Panc1 (cell line): ENCODE measurements at regions of chr13 and their contacts with region 1.

Region 1: DNA sequence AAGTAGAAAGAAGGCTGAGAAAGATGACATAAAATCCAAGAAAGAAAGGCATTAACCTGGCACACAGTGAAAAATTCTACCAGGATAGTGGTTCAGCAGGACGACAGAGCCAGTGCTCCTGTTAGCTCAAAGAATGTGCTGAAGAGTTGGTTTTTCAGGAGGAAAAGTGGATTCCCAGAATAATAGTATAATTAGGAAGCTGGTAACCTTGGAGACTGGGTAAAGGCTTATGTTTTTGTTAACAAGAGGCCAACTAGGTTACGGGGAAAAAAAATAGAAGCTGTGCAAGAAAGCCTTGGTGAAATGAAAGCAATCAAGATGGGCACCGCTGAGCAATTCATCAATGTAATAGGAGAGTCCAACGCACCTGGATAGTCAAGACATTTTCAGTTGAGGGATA is 54.7 kb downstream of the SLC15A1 start:
- DNase-seq: no peak
- ATAC-seq: no peak
- H3K4me3 ChIP-seq: no peak overlapping the region
- H3K27ac ChIP-seq: no peak overlapping the region
- H3K4me1 ChIP-seq: no peaks in the 10 kb centered on the region
- H3K27me3 ChIP-seq: no peaks in the 10 kb centered on the region
- CTCF ChIP-seq: no peak

Region 2: GRCh38 chr13:98509271-98510155 is 188.3 kb before region 1 on chr13:
- CTCF ChIA-PET with region 1: no interaction called
- POLR2A ChIA-PET with region 1: no interaction called
- in situ Hi-C with region 1: no loop called
- intact Hi-C with region 1: no loop called
- DNase-seq: no peak
- ATAC-seq: 0 out of 2 replicates have a peak, but pooled peaks have one; percentile 65
- H3K4me3 ChIP-seq: no peak overlapping the region
- H3K27ac ChIP-seq: peak overlapping the region; percentile 34; the same call in 1 of the 2 replicates
- H3K4me1 ChIP-seq: peaks cover 19% of the 10 kb centered on the region
- H3K27me3 ChIP-seq: no peaks in the 10 kb centered on the region
- CTCF ChIP-seq: no peak

Region 3: DNA sequence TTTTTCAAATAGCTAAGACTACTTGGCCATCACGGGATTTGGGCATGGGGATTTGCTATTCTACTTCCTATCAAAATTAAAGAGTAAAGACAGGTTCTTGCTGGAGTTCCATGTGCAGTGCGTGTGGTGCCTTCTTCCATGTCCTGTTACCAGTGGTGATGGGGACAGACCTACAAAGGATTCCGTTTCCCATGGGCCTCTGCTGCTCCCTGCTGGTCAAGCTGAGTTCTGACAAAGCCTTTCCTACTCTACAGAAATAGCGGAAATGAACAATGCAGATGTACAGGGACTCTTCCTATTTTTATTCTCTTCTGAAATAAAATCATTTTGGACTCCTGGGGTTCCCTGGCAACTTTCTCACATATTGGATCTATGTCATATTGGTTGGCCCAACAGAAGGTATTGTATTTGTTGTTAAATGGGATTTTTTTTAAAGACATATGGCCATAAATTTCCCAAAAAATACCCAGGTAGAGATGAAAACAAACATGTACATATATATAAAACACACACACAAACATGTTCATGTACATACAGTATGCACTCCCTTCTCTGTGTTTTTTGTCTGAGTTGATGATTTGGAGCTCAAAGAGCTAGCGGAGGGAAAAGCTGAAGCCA is 145.2 kb after region 1 on chr13:
- CTCF ChIA-PET with region 1: no interaction called
- POLR2A ChIA-PET with region 1: no interaction called
- in situ Hi-C with region 1: no loop called
- intact Hi-C with region 1: loop called (anchors 10 kb)
- DNase-seq: peak; percentile 54
- ATAC-seq: peak; percentile 88
- H3K4me3 ChIP-seq: no peak overlapping the region
- H3K27ac ChIP-seq: no peak overlapping the region
- H3K4me1 ChIP-seq: no peaks in the 10 kb centered on the region
- H3K27me3 ChIP-seq: no peaks in the 10 kb centered on the region
- CTCF ChIP-seq: peak; percentile 80